ENCODE measurements at regions of chr2 and their contacts with region 1.

Region 1: GRCh38 chr2:226799181-226799975 is at the start of gene IRS1:
- DNase-seq: peak; percentile 74 to 89 (median 81)
- ATAC-seq: peak in 3 of 4 donors; percentile 28 to 66 (median 54)
- H3K4me3 ChIP-seq: peak within 1 kb of the TSS; percentile 45 to 97 (median 82)
- H3K27ac ChIP-seq: peak within 1 kb of the TSS; percentile 69 to 98 (median 94)
- H3K4me1 ChIP-seq: peaks cover 0 to 63% (median 36%) of the 10 kb centered on the region in 12 donors
- H3K27me3 ChIP-seq: peaks cover 0 to 31% (median 0%) of the 10 kb centered on the region in 9 donors
- CTCF ChIP-seq: peak in 7 of 12 donors; percentile 25 to 68 (median 39)
- POLR2A ChIP-seq: peak in 1 of 2 donors; percentile 53
- total RNA-seq, gene IRS1: 13.4 to 45.8 (median 16.8) TPM

Region 2: DNA sequence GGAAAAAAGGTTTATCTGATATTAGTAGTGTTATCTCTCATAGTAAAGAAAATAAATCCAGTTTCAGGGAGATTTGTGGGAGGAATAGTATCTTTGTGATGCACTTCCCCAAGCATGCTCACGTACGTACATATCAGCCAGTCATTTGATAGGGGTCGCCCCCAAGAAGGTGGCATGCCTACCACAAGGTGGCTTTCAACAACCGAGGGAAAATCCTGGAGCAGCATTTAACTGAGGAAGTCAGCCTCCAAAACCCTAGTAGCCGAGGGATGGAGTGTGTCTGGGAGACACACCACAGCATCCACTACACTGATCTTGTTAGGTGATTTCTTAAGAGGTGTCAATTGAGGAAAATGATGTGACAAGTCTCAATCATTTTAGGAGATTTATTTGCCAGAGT is 776.0 kb before region 1 on chr2:
- intact Hi-C with region 1: loop called in 1 of 10 experiments (anchors 10 kb)
- DNase-seq: no peak
- ATAC-seq: no peak
- H3K4me3 ChIP-seq: no peak overlapping the region
- H3K27ac ChIP-seq: no peak overlapping the region
- H3K4me1 ChIP-seq: no peaks in the 10 kb centered on the region
- H3K27me3 ChIP-seq: no peaks in the 10 kb centered on the region
- CTCF ChIP-seq: peak in 2 of 12 donors; percentile 8
- POLR2A ChIP-seq: no peak

Region 3: DNA sequence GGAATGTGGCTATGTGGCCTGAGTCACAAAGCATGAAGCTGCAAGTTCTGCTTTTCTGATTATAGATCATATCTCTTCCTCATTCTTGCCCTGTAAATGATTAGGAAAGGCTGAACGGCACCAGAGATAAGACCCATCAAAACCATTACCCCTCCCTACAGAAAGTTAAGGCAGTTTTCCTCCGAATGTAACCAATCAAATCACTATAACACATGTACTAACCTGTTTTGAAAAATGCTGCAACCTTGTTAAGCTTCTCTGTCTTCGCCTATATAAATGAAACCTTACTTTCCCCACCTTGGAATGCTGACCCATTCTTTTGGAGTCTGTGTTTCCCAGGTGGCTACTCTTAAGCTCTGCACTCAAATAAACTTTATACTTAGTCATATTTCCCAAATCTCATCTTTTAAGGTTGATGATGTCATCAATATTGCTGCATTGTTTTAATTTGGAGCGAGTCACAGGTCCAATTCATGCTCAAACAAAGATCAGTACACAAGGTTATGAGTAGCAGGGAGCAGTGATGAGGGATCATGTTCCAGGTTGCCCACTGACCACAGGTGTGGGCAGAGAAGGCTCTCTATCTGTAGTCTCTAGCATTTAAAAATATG is 662.1 kb before region 1 on chr2:
- intact Hi-C with region 1: loop called in 3 of 10 experiments (anchors 5 to 10 kb)
- DNase-seq: no peak
- ATAC-seq: no peak
- H3K4me3 ChIP-seq: no peak overlapping the region
- H3K27ac ChIP-seq: peak overlapping the region in 1 of 12 donors; percentile 49
- H3K4me1 ChIP-seq: peaks cover 0 to 14% (median 0%) of the 10 kb centered on the region in 12 donors
- H3K27me3 ChIP-seq: no peaks in the 10 kb centered on the region
- CTCF ChIP-seq: no peak
- POLR2A ChIP-seq: no peak

Region 4: GRCh38 chr2:226631671-226632070 is 167.7 kb before region 1 on chr2:
- intact Hi-C with region 1: loop called in 1 of 10 experiments (anchors 5 kb)
- DNase-seq: no peak
- ATAC-seq: peak; percentile 74 to 94 (median 93)
- H3K4me3 ChIP-seq: no peak overlapping the region
- H3K27ac ChIP-seq: peak overlapping the region in 10 of 12 donors; percentile 16 to 80 (median 40)
- H3K4me1 ChIP-seq: peaks cover 0 to 10% (median 5%) of the 10 kb centered on the region in 12 donors
- H3K27me3 ChIP-seq: no peaks in the 10 kb centered on the region
- CTCF ChIP-seq: no peak
- POLR2A ChIP-seq: no peak

Region 5: GRCh38 chr2:226733189-226733858 is 66.1 kb before region 1 on chr2:
- intact Hi-C with region 1: loop called in 8 of 10 experiments (anchors 5 to 10 kb)
- DNase-seq: no peak
- ATAC-seq: peak in 3 of 4 donors; percentile 54 to 68 (median 64)
- H3K4me3 ChIP-seq: no peak overlapping the region
- H3K27ac ChIP-seq: peak overlapping the region in 11 of 12 donors; percentile 2 to 58 (median 24)
- H3K4me1 ChIP-seq: peaks cover 0 to 34% (median 15%) of the 10 kb centered on the region in 12 donors
- H3K27me3 ChIP-seq: no peaks in the 10 kb centered on the region
- CTCF ChIP-seq: no peak
- POLR2A ChIP-seq: no peak

Region 6: GRCh38 chr2:227106845-227107759 is 307.7 kb after region 1 on chr2:
- intact Hi-C with region 1: loop called in 2 of 10 experiments (anchors 10 kb)
- DNase-seq: peak in 1 of 5 donors; percentile 22
- ATAC-seq: peak in 3 of 4 donors; percentile 37 to 66 (median 59)
- H3K4me3 ChIP-seq: no peak overlapping the region
- H3K27ac ChIP-seq: no peak overlapping the region
- H3K4me1 ChIP-seq: no peaks in the 10 kb centered on the region
- H3K27me3 ChIP-seq: no peaks in the 10 kb centered on the region
- CTCF ChIP-seq: peak; percentile 46 to 64 (median 56)
- POLR2A ChIP-seq: no peak

Measured in heart left ventricle (tissue), 16 donors.